ENCODE measurements at regions of chr4 and their contacts with region 1.

Region 1: GRCh38 chr4:82388405-82388804 is 14.6 kb upstream of the HNRNPD start:
- DNase-seq: no peak
- ATAC-seq: peak; percentile 50; the same call in 2 of the 3 replicates
- H3K4me3 ChIP-seq: no peak overlapping the region
- H3K27ac ChIP-seq: no peak overlapping the region
- H3K4me1 ChIP-seq: no peaks in the 10 kb centered on the region
- H3K27me3 ChIP-seq: no peaks in the 10 kb centered on the region
- CTCF ChIP-seq: peak in 2 of 3 experiments; percentile 7 to 17; a peak in 2 of 6 replicates
- EP300 ChIP-seq: no peak
- POLR2A ChIP-seq: no peak
- RAD21 ChIP-seq: no peak

Region 2: DNA sequence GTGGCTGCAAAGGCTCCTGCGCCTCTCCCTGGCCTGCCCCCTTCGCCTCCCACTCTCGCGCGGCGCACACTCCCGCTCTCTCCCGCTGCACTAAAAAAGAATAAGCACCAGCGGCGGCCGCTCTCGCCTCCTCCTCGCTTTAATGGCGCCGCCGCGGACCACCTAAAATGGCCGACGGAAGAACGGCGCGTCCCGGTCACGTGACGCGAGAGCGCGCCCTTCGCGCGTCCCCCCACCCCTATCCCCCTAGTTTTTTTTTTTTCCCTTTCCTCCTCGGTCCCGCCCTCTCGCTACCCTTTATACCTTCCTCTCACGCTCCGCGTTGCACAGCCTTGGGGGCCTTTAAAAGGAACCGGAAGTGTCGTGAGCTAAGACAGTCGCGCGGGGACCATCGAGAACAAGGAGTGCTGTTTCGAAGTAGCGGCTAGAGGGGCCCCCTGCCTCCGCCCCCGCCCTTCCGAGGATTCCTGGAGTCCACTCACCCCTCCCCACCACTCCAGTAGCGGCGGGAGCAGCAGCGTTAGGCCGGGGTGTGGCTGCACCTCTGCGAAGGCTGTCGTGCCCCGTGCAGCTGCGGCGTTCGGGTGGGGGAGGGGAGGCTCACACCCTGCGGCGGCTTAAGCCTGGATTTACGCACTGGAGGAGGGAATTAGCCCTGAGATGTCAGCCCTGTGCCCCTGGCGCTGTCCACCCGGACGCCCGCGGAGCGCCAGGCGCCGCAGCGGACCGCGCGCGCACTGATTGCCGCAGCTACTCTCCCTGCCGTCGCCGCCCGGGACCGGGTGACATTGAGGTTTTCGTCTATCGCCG is 14.4 kb before region 1 on chr4 and contains the start of gene HNRNPD:
- CTCF ChIA-PET with region 1: no interaction called
- POLR2A ChIA-PET with region 1: no interaction called
- RAD21 ChIA-PET with region 1: no interaction called
- SMC1A ChIA-PET with region 1: no interaction called
- in situ Hi-C with region 1: no loop called
- intact Hi-C with region 1: no loop called
- DNase-seq: peak; percentile 97
- ATAC-seq: peak; percentile 92
- H3K4me3 ChIP-seq: peak within 1 kb of the TSS; percentile 90
- H3K27ac ChIP-seq: peak within 1 kb of the TSS; percentile 98
- H3K4me1 ChIP-seq: peaks cover 6% of the 10 kb centered on the region
- H3K27me3 ChIP-seq: no peaks in the 10 kb centered on the region
- CTCF ChIP-seq: no peak
- EP300 ChIP-seq: peak in 1 of 2 experiments; percentile 28; a peak in 1 of 4 replicates
- POLR2A ChIP-seq: peak; percentile 99
- RAD21 ChIP-seq: 0 out of 2 replicates have a peak, but pooled peaks have one; percentile 1
- polyA plus RNA-seq, gene HNRNPD: 183 to 313 TPM

Region 3: DNA sequence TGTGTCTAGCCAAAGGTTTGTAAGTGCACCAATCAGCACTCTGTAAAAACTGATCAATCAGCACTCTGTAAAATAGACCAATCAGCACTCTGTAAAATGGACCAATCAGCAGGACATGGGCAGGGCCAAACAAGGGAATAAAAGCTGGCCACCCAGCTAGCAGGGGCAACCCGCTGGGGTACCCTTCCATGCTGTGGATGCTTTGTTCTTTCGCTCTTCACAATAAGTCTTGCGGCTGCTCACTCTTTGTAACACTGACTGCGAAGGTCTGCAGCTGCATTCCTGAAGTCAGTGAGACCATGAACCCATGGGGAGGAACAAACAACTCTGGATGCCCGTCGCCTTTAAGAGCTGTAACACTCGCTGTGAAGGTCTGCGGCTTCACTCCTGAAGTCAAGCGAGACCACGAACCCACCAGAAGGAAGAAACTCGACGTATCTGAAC is 27.5 kb after region 1 on chr4:
- CTCF ChIA-PET with region 1: no interaction called
- POLR2A ChIA-PET with region 1: interaction called, 4 read pairs
- RAD21 ChIA-PET with region 1: no interaction called
- SMC1A ChIA-PET with region 1: no interaction called
- in situ Hi-C with region 1: no loop called
- intact Hi-C with region 1: loop called (anchors 2 kb)
- DNase-seq: no peak
- ATAC-seq: no peak
- H3K4me3 ChIP-seq: no peak overlapping the region
- H3K27ac ChIP-seq: no peak overlapping the region
- H3K4me1 ChIP-seq: no peaks in the 10 kb centered on the region
- H3K27me3 ChIP-seq: no peaks in the 10 kb centered on the region
- CTCF ChIP-seq: no peak
- EP300 ChIP-seq: no peak
- POLR2A ChIP-seq: no peak
- RAD21 ChIP-seq: no peak

Region 4: DNA sequence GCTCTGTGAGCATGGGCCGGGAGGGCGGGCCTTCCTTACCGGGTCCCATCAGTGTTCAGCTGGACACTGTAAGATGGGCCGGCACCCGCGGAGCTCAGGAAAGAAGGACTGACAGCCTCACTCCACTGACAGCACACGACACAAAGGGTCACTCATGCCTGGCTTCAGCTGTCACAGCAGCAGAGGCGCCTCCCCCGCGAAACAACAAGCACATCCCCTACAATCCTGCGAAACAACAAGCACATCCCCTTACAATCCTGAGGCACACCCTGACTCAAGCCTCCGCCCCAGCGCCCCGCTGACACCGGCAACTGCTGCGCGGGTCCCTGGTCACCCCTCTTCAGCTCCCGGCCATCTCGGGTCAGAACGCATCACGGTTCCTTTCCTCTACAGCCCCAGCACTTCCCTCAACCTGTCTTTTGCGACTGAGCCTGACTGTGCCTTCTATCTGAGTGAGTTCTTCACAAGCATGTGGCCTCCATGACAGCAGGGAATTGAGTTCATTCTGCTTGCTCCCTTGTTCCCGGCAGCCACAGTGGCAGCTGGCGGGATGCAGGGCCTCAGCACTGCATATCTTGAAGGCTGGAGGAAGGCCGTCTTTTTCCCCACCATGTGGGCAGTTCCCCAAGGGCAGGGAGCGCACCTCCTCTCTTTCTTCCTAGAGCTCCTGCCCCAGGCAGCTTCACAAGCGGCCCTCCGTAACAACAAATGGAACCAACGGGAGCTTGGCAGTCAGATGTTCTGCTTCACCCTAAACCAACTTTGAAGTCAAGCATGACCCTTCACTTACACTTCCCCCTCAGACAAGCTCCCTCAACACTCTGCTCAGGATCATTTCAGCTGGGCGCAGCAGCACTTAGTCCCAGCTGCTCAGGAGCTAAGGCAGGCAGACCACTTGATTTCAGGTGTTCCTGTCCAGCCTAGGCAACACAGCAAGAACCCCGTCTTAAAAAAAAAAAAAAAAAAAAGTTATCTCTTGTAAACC is 370.6 kb after region 1 on chr4:
- CTCF ChIA-PET with region 1: no interaction called
- POLR2A ChIA-PET with region 1: no interaction called
- RAD21 ChIA-PET with region 1: no interaction called
- SMC1A ChIA-PET with region 1: no interaction called
- in situ Hi-C with region 1: no loop called
- intact Hi-C with region 1: no loop called
- DNase-seq: no peak
- ATAC-seq: no peak
- H3K4me3 ChIP-seq: no peak overlapping the region
- H3K27ac ChIP-seq: no peak overlapping the region
- H3K4me1 ChIP-seq: peaks cover 6% of the 10 kb centered on the region; the same call in 1 of the 2 replicates
- H3K27me3 ChIP-seq: no peaks in the 10 kb centered on the region
- CTCF ChIP-seq: no peak
- EP300 ChIP-seq: no peak
- POLR2A ChIP-seq: no peak
- RAD21 ChIP-seq: no peak

Region 5: DNA sequence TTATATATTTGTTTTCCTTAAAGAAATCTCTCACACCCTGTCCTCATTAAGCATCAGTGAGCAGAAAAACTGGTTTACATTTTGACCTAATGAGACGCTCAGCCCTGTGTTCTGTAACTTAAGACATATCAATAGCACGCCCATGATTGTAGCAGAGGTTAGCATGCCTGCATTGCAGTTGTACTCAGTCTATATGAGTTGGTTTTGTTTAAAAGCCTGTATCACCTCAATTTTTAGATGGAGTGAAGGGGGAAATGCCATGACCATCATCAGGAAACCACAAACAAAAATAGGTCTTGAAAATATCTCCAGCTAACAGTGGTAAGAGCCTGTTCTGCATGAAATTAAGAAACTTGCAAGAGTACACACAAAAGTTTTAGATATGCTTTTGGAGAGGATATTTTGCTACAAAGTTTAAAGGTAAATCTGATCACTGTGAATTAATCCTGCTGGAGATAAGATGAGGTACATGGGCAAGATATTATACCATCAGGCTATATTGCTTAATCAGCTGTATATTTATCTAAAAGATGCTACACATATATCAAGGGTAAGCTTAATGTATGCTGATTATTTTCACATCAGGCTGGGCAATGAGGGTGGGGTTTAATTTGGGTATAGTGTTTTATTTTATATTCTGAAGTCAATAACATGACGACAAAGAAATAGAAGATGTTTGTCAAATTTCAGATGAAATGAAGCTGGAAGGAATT is 909.3 kb after region 1 on chr4:
- CTCF ChIA-PET with region 1: no interaction called
- POLR2A ChIA-PET with region 1: interaction called, 11 read pairs
- RAD21 ChIA-PET with region 1: no interaction called
- SMC1A ChIA-PET with region 1: no interaction called
- in situ Hi-C with region 1: no loop called
- intact Hi-C with region 1: no loop called
- DNase-seq: no peak
- ATAC-seq: peak; percentile 39; the same call in 2 of the 3 replicates
- H3K4me3 ChIP-seq: no peak overlapping the region
- H3K27ac ChIP-seq: no peak overlapping the region
- H3K4me1 ChIP-seq: peaks cover 6% of the 10 kb centered on the region
- H3K27me3 ChIP-seq: no peaks in the 10 kb centered on the region
- CTCF ChIP-seq: no peak
- EP300 ChIP-seq: no peak
- POLR2A ChIP-seq: no peak
- RAD21 ChIP-seq: no peak

Measured in GM12878 (cell line).